Mammary epithelial cell (primary cell): ENCODE measurements at regions of chr4 and their contacts with region 1.

Region 1: DNA sequence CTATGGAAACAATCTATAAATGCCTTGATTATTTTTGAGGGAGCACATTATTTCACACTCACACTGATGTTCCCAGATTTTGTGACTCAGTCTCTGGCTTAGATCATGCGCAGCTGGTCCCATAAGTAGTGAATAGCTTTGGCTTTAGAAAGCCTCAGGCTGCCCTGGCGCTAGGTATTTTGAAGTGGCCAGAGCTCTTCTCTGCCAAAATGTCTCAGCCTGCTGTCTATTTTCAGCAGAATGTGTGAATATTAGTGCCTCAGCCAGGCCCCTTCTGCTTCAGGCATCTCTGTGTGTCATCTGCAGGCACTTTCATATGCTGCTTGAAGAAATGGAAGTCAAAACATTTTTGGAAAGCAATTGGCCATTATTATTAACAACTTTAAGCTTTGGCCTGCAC is 931.0 kb upstream of the INTU start:
- DNase-seq: peak; percentile 42
- H3K4me3 ChIP-seq: no peak overlapping the region
- H3K27ac ChIP-seq: no peak overlapping the region
- H3K4me1 ChIP-seq: peaks cover 21% of the 10 kb centered on the region
- H3K27me3 ChIP-seq: no peaks in the 10 kb centered on the region
- CTCF ChIP-seq: no peak

Region 2: DNA sequence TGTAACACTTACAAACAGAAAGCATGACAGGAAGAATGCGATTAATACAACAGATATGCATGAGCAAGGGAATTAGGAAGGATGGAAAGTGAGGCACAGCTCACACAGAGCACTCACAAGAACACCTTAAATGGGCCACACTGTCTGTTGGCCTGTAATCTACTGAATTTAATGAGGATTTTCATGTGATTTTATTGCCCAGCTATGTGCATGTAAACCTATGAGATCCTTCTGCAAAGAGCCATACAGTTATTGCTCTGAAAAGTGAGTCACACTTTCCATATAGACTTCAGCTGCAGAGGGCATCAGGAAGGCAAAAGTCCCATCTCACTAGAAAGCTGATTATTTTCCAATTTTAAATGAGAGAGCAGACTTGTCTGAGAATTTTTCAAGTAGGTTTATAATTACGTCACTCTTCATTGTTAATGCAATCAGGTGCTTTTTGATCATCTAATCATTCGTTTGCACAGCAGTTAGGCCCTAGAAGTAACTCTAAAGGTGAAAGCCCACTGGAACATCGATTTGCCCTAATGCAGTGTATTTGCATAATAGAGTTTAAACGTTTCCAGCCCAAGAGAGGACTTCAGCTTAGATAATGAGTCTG is 98.3 kb after region 1 on chr4:
- CTCF ChIA-PET with region 1: no interaction called
- dilution Hi-C with region 1: no loop called
- in situ Hi-C with region 1: no loop called
- intact Hi-C with region 1: loop called (anchors 10 kb)
- DNase-seq: no peak
- H3K4me3 ChIP-seq: no peak overlapping the region
- H3K27ac ChIP-seq: no peak overlapping the region
- H3K4me1 ChIP-seq: no peaks in the 10 kb centered on the region
- H3K27me3 ChIP-seq: no peaks in the 10 kb centered on the region
- CTCF ChIP-seq: no peak